ENCODE measurements at regions of chr12 and their contacts with region 1.

Region 1: DNA sequence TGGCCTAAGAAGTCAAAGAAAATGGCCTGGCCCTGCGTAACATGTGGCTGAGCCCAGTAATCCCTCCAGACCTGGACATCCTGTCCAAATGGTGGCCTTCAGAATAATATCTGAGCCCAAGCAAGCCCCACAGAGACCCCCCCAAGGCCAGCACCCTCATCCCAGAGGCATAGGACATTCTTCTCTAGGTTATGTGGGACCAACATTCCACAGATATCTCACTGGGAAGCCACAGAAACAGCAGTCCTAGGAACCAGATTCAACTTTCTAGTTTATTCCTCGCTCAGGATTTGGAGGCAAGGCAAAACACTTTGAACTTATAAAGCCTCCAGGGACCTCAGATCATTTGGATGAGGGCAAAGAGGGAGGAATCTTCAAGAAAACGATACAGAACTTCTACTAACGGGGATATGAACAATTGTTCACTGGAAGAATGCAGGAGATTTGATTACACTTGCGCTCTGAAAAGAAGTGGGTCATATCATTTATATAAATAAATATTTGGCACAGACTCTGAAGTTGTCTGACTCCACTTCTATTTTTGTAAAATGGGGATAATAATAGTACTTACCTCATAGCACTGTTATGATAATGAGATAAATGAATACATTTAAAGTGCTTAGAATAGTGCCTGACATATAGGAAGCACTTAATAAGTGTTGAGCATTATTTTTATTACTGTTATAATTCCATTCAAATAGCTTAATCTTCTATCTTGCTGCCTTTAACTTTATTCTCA is 171.5 kb downstream of the NUAK1 start:
- DNase-seq: no peak
- H3K4me3 ChIP-seq: no peak overlapping the region
- H3K27ac ChIP-seq: peak overlapping the region; percentile 77 to 84
- H3K4me1 ChIP-seq: peaks cover 10 to 21% of the 10 kb centered on the region in 2 donors
- H3K27me3 ChIP-seq: no peaks in the 10 kb centered on the region
- CTCF ChIP-seq: no peak

Region 2: GRCh38 chr12:104582739-104583138 is 1384.5 kb before region 1 on chr12:
- intact Hi-C with region 1: no loop called
- DNase-seq: no peak
- H3K4me3 ChIP-seq: no peak overlapping the region
- H3K27ac ChIP-seq: no peak overlapping the region
- H3K4me1 ChIP-seq: peaks cover 0 to 7% of the 10 kb centered on the region in 2 donors
- H3K27me3 ChIP-seq: no peaks in the 10 kb centered on the region
- CTCF ChIP-seq: no peak

Region 3: DNA sequence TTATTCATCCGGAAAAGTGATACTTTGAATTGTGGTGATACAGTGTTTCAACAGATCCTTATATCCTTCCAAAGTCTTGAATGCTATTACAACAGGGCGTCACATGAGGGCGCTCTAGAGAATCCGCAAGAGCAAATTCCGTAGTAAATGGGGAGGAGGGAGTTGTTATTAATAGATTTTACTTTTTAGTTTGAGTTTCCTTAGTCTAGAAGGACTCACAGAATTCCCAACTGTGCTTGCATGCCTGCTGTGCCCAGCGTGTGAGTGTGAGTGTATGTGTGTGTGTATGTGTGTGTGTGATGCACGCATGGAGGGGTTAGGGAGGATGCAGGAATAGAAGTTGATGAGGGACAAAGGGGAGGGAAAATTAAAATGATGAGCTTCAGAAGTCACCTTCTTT is 261.4 kb before region 1 on chr12:
- intact Hi-C with region 1: loop called (anchors 2 kb)
- DNase-seq: peak in 1 of 2 donors; percentile 82
- H3K4me3 ChIP-seq: no peak overlapping the region
- H3K27ac ChIP-seq: peak overlapping the region; percentile 74 to 83
- H3K4me1 ChIP-seq: peaks cover 0 to 18% of the 10 kb centered on the region in 2 donors
- H3K27me3 ChIP-seq: no peaks in the 10 kb centered on the region
- CTCF ChIP-seq: peak; percentile 57 to 90 (median 84)

Region 4: DNA sequence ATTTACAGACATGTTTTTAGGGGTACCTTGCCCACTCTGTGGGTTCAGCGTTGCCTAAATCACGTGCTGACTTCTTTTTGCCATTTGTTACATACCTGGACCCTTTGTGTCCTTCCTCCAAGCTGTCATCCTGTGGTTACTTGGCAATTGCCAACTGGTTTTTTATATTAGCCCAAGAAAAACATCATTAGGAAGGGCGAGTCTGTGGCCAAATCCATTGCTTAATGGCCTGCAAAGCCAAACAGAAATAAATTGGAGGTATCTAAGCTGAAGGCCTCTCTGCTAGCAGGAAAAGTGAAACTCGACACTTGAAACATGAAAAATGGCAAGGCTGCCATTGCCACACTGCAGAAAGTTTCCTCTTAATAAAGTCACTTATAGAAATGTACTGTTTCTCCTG is 18.9 kb before region 1 on chr12:
- intact Hi-C with region 1: loop called (anchors 1 kb)
- DNase-seq: peak in 1 of 2 donors; percentile 78
- H3K4me3 ChIP-seq: no peak overlapping the region
- H3K27ac ChIP-seq: peak overlapping the region; percentile 79 to 86
- H3K4me1 ChIP-seq: peaks cover 6 to 15% of the 10 kb centered on the region in 2 donors
- H3K27me3 ChIP-seq: no peaks in the 10 kb centered on the region
- CTCF ChIP-seq: no peak

Region 5: DNA sequence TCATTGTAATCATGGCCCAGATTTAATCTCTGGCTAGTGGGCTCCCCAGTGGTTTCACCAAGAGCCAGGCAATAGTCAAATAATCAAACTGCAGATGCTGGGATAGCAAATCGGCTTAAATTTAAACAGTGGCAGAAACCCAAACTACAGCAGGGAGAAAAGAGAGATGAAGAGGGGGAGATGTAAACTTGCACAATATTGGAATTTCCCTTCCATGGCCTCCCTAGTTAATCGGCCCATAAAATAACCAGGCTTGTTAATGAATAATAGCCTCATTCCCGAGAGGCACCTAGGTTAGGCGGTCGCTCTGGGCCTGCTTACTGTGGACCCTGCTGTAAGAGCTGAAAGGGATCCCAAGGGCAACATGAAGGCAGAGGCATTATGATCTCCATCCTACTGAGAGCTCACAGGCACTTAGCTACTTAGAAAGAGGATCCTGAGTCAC is 55.4 kb after region 1 on chr12:
- intact Hi-C with region 1: loop called (anchors 5 kb)
- DNase-seq: no peak
- H3K4me3 ChIP-seq: no peak overlapping the region
- H3K27ac ChIP-seq: no peak overlapping the region
- H3K4me1 ChIP-seq: peaks cover 0 to 12% of the 10 kb centered on the region in 2 donors
- H3K27me3 ChIP-seq: no peaks in the 10 kb centered on the region
- CTCF ChIP-seq: no peak

Region 6: GRCh38 chr12:106078358-106079010 is 111.3 kb after region 1 on chr12:
- intact Hi-C with region 1: loop called (anchors 5 kb)
- DNase-seq: peak in 1 of 2 donors; percentile 92
- H3K4me3 ChIP-seq: no peak overlapping the region
- H3K27ac ChIP-seq: peak overlapping the region; percentile 88 to 92
- H3K4me1 ChIP-seq: peaks cover 8 to 69% of the 10 kb centered on the region in 2 donors
- H3K27me3 ChIP-seq: no peaks in the 10 kb centered on the region
- CTCF ChIP-seq: no peak